Posterior cingulate gyrus (tissue), 11 donors: ENCODE measurements at regions of chr5 and their contacts with region 1.

Region 1: GRCh38 chr5:32076699-32077695 is 97.1 kb downstream of the GOLPH3 start:
- DNase-seq: peak in 4 of 10 donors; percentile 45 to 62 (median 54)

Region 2: DNA sequence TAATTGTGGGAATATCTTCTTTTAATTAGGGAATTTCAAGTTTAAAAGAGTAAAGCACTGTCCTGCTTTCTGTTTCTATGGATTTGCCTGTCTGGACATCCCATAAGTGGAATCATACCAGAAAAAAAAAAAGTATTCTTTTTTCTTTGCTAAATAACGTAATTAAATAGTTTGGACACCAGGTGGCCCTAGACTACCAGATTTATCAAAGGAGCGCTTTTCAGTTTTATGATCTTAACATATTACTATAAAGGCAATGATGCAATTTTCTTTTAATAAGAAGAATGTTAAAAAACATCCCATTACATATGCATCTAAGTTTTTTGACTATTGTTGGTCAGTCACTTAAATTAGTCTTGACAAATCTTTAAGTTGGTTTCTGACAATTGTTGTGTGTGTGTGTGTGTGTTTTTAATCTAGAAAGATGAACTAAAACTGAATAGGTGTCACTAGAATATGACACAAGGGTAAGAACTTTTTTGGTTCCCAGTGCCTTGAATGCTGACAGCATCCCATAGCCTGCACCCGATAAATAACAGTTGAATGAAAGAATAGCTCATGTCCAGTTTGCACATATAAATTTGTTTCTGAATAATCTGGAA is 495.4 kb before region 1 on chr5:
- intact Hi-C with region 1: loop called (anchors 5 kb)
- DNase-seq: no peak

Region 3: GRCh38 chr5:31733371-31733770 is 343.6 kb before region 1 on chr5:
- intact Hi-C with region 1: no loop called
- DNase-seq: peak in 9 of 10 donors; percentile 53 to 94 (median 68)

Region 4: GRCh38 chr5:31825518-31826068 is 251.4 kb before region 1 on chr5:
- intact Hi-C with region 1: loop called (anchors 5 kb)
- DNase-seq: peak in 5 of 10 donors; percentile 15 to 58 (median 41)

Region 5: GRCh38 chr5:31921852-31922305 is 155.1 kb before region 1 on chr5:
- intact Hi-C with region 1: loop called (anchors 10 kb)
- DNase-seq: no peak

Region 6: GRCh38 chr5:32027717-32028321 is 49.2 kb before region 1 on chr5:
- intact Hi-C with region 1: loop called (anchors 5 kb)
- DNase-seq: peak in 2 of 10 donors; percentile 23 to 29

Region 7: GRCh38 chr5:32709781-32710549 is 633.0 kb after region 1 on chr5:
- intact Hi-C with region 1: no loop called
- DNase-seq: peak in 9 of 10 donors; percentile 47 to 93 (median 60)